Dorsolateral prefrontal cortex (tissue), 120 donors: ENCODE measurements at regions of chr2 and their contacts with region 1.

Region 1: DNA sequence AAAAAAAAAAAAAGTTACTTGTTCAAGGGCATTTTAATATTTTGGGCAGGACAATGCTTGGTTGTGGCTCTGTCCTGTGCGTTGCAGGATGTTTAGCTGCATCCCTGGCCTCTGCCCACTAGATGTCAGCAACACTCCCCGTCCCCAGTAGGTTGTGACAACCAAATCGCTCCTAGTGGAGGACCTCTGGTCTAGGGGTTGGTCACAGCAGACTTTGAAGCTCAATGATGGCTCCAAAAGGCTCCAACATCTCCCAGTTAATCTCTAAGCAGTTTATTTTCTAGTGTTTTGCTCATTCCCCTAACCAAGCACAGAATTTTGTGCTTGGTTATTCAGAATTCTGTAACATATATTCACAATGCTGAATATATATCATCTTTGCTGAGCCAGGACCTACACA is 67.0 kb downstream of the CHRNA1 start:
- DNase-seq: peak; percentile 30 to 74 (median 68)
- H3K4me3 ChIP-seq: peak overlapping the region in 1 of 59 donors; percentile 10
- H3K27ac ChIP-seq: peak overlapping the region in 1 of 59 donors; percentile 18
- H3K27me3 ChIP-seq: no peaks in the 10 kb centered on the region
- CTCF ChIP-seq: peak; percentile 38 to 85 (median 76)

Region 2: GRCh38 chr2:174487108-174487819 is 210.0 kb before region 1 on chr2:
- intact Hi-C with region 1: loop called (anchors 5 to 10 kb)
- DNase-seq: peak; percentile 93 to 99 (median 98)
- H3K4me3 ChIP-seq: peak overlapping the region; percentile 67 to 99 (median 95)
- H3K27ac ChIP-seq: peak overlapping the region in 56 of 59 donors; percentile 13 to 95 (median 82)
- H3K27me3 ChIP-seq: no peaks in the 10 kb centered on the region
- CTCF ChIP-seq: peak in 2 of 56 donors; percentile 14 to 21

Region 3: DNA sequence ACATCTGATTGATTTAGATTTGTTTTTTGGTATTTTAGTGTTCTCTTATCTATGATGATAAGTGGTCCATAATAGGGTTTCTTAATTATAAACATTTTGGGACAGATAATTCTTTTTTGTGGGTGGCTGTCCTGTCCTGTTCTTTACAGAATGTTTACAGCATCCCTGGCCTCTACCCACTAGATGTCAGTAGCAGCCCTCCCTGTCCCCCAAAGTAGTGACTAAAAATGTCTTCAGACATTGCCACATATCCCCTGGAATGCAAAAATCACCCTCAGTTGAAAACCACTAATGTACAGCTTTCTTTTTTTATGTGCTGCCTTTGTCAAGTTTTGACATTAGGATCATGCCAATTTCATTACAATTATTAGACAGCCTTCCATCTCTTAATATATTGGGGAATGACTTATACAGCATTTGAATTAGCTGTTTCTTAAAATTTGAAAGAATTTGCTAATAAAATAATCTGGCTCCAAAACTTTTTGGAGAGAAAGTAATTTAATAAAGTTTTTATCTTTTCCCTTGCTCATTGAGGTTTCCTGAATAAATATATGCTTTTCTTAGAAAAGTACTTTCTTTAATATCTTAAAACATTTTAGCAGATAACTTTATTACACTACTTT is 119.2 kb before region 1 on chr2:
- intact Hi-C with region 1: loop called in 1 of 2 experiments (anchors 5 kb)
- DNase-seq: peak in 2 of 10 donors; percentile 45 to 68
- H3K4me3 ChIP-seq: no peak overlapping the region
- H3K27ac ChIP-seq: peak overlapping the region in 14 of 59 donors; percentile 3 to 94 (median 73)
- H3K27me3 ChIP-seq: no peaks in the 10 kb centered on the region
- CTCF ChIP-seq: peak in 55 of 56 donors; percentile 36 to 81 (median 58)

Region 4: GRCh38 chr2:175167792-175168563 is 470.7 kb after region 1 on chr2 and contains the start of gene ATF2:
- intact Hi-C with region 1: loop called in 1 of 2 experiments (anchors 10 kb)
- DNase-seq: peak; percentile 74 to 98 (median 96)
- H3K4me3 ChIP-seq: peak within 1 kb of the TSS; percentile 49 to 100 (median 95)
- H3K27ac ChIP-seq: peak within 1 kb of the TSS; percentile 64 to 99 (median 94)
- H3K27me3 ChIP-seq: no peaks in the 10 kb centered on the region
- CTCF ChIP-seq: peak in 21 of 56 donors; percentile 3 to 34 (median 15)
- total RNA-seq, gene ATF2: 70.3 to 129 (median 104) TPM